ENCODE measurements at regions of chr20 and their contacts with region 1.

Region 1: DNA sequence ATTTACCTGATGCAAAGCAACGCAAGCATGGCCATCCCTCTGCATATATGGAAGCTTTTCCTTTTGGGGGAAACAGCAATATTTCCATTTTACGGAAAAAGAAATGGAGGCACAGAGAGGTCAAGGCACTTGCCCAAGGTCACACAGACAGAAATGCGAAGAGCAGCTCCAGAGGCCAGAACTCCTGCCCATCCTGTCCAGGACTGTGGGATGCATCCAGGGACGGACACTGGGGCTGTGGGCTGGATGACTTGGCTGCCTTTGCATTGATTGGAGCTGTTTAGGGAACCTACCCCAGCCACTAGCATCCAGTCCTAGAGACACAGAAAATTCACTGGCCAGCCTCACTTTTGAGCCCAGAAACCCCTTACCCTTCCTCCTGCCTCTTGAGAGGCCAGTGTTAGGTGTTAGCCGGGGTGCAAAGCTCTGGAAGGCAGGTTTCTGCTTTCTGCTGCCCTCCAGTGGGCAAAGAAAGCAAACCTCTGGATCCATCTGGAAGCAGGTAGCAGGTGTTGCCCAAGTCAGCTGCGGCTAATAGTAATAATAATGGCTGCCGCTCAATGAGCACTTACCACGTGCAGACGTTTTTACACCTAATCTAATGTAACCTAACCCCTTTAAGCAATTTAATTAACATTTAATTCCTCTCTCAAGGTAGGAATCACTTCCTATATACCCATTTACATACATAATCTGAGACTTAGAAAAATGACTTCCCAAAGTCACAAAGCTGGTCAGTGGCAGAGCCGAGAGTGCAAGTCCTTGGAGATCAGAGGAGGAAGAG is 31.7 kb upstream of the CCN5 start:
- DNase-seq: peak in 4 of 6 donors; percentile 47 to 73 (median 69)
- ATAC-seq: peak; percentile 83 to 92 (median 88)
- H3K4me3 ChIP-seq: no peak overlapping the region
- H3K27ac ChIP-seq: no peak overlapping the region
- H3K4me1 ChIP-seq: no peaks in the 10 kb centered on the region
- H3K27me3 ChIP-seq: no peaks in the 10 kb centered on the region
- CTCF ChIP-seq: peak in 3 of 4 donors; percentile 25 to 54 (median 40)

Region 2: GRCh38 chr20:44733341-44734069 is 50.0 kb after region 1 on chr20:
- intact Hi-C with region 1: loop called in 2 of 3 experiments (anchors 5 kb)
- DNase-seq: peak in 5 of 6 donors; percentile 27 to 76 (median 55)
- ATAC-seq: peak; percentile 27 to 72 (median 67)
- H3K4me3 ChIP-seq: no peak overlapping the region
- H3K27ac ChIP-seq: no peak overlapping the region
- H3K4me1 ChIP-seq: no peaks in the 10 kb centered on the region
- H3K27me3 ChIP-seq: no peaks in the 10 kb centered on the region
- CTCF ChIP-seq: peak; percentile 62 to 76 (median 68)

Region 3: DNA sequence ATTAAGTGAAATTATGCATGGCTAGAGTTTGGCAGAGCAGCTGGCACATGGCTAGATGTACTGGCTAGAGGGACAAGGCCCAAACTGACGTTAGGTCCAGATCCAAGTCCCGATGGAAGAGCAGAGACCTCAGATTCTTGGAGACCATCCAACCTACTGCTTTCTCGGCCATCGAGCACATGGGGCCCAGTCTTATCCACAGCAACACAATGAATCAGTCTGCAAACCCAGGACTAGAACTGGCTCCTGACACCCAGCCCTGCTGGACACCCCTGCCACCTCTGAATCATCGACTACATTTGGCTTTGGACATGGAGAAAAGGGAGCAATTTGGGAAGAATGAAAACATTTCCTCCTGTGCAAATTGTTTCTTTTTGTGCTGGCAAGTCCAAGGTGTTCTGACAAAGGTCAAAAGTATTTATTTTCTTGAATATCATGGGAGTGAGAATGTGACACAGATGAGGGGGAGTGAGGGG is 178.1 kb after region 1 on chr20:
- intact Hi-C with region 1: loop called in 2 of 3 experiments (anchors 5 to 10 kb)
- DNase-seq: peak in 1 of 6 donors; percentile 35
- ATAC-seq: peak; percentile 61 to 72 (median 66)
- H3K4me3 ChIP-seq: no peak overlapping the region
- H3K27ac ChIP-seq: peak overlapping the region in 1 of 4 donors; percentile 8
- H3K4me1 ChIP-seq: peaks cover 14 to 15% (median 14%) of the 10 kb centered on the region in 3 donors
- H3K27me3 ChIP-seq: no peaks in the 10 kb centered on the region
- CTCF ChIP-seq: no peak

Region 4: DNA sequence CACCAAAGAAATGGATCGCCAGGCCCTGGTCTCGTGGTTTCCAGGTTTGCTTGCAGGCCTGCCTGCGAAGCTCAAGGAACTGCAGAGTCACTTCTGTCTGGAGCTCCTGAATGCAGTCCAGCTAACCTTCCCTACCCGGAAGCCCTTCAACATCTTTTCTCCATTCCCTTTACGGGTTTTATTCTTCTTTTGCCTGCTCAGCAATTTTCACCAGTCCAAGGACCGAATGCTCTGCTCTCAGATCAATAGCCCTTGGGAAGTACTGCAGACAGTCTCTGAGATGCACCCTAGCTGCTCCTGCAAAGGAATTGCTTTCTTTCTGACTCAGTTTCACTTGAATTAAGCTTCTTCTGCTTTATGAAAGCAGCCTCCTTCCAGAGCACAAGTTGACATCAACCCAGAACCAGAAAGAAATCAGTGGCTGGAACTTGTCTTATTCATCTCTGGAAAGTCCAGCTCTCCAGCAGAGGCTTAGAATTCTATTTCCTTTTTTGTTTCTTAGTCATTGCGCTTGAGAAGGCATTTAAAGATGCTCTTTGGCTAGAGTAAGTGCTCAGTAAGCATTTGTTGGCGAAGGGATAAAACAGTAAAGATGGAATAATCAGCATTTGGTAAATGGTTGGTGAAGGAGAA is 183.4 kb after region 1 on chr20:
- intact Hi-C with region 1: loop called in 2 of 3 experiments (anchors 5 to 10 kb)
- DNase-seq: no peak
- ATAC-seq: no peak
- H3K4me3 ChIP-seq: no peak overlapping the region
- H3K27ac ChIP-seq: no peak overlapping the region
- H3K4me1 ChIP-seq: peaks cover 12 to 14% (median 14%) of the 10 kb centered on the region in 3 donors
- H3K27me3 ChIP-seq: no peaks in the 10 kb centered on the region
- CTCF ChIP-seq: no peak

Region 5: DNA sequence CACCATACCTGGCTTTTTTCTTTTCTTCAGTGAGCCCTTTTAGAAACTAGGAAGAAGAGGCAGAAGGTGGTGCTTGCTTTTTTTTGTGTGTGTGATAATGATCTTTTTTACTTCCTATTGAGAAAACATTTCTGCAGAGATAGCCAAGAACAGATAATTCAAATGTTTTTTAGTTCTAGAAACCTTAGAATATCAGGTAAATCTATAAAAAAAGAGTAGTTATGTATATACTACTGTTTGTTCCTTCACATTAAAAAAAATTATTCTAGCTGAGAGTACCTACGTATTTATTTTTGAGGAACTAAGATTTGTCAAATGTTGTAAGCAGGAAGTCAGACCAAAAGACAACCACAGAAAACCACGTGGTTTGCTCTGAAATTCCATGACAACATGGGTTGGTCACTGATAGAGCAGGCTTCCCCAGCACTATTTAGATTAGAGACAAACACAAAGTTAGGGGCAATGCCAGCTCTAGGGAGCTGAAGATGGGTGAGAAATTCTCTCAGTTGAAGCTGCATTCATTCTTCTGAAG is 295.7 kb after region 1 on chr20:
- intact Hi-C with region 1: no loop called
- DNase-seq: no peak
- ATAC-seq: peak in 3 of 4 donors; percentile 64 to 88 (median 83)
- H3K4me3 ChIP-seq: no peak overlapping the region
- H3K27ac ChIP-seq: peak overlapping the region in 3 of 4 donors; percentile 3 to 56 (median 49)
- H3K4me1 ChIP-seq: no peaks in the 10 kb centered on the region
- H3K27me3 ChIP-seq: no peaks in the 10 kb centered on the region
- CTCF ChIP-seq: no peak

Measured in pancreas (tissue), 10 donors.